AG04450 (cell line): ENCODE measurements at regions of chr20 and their contacts with region 1.

Region 1: DNA sequence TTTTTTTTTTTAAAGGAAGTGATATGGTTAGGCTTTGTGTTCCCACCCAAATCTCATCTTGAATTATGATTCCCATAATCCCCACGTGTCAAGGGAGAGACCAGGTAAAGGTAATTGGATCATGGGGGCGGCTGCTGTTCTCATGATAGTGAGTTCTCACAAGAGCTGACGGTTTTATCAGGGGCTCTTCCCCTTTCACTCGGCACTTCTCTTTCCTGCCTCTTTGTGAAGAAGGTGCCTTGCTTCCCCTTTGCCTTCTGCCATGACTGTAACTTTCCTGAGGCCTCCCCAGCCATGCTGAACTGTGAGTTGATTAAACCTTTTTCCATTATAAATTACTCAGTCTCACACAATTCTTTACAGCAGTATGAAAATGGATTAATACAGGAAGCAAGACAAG is 64.3 kb downstream of the ZFP64 start:
- DNase-seq: no peak
- H3K4me3 ChIP-seq: no peak overlapping the region
- H3K27ac ChIP-seq: no peak overlapping the region
- H3K27me3 ChIP-seq: no peaks in the 10 kb centered on the region
- CTCF ChIP-seq: no peak

Region 2: GRCh38 chr20:52142757-52143156 is 15.4 kb after region 1 on chr20:
- CTCF ChIA-PET with region 1: interaction called, 18 read pairs
- POLR2A ChIA-PET with region 1: no interaction called
- DNase-seq: no peak
- H3K4me3 ChIP-seq: no peak overlapping the region
- H3K27ac ChIP-seq: no peak overlapping the region
- H3K27me3 ChIP-seq: no peaks in the 10 kb centered on the region
- CTCF ChIP-seq: no peak

Region 3: GRCh38 chr20:52150440-52151258 is 23.3 kb after region 1 on chr20:
- CTCF ChIA-PET with region 1: interaction called, 39 read pairs
- POLR2A ChIA-PET with region 1: no interaction called
- DNase-seq: peak; percentile 20
- H3K4me3 ChIP-seq: no peak overlapping the region
- H3K27ac ChIP-seq: no peak overlapping the region
- H3K27me3 ChIP-seq: no peaks in the 10 kb centered on the region
- CTCF ChIP-seq: peak; percentile 88